Transverse colon (tissue), 4 donors: ENCODE measurements at regions of chr15 and their contacts with region 1.

Region 1: GRCh38 chr15:65184868-65185738 is at the start of gene CLPX:
- DNase-seq: peak; percentile 93
- H3K4me3 ChIP-seq: peak within 1 kb of the TSS; percentile 70 to 97 (median 86)
- H3K27ac ChIP-seq: peak within 1 kb of the TSS; percentile 95 to 98 (median 96)
- H3K4me1 ChIP-seq: peaks cover 9 to 40% (median 24%) of the 10 kb centered on the region in 4 donors
- H3K27me3 ChIP-seq: no peaks in the 10 kb centered on the region
- CTCF ChIP-seq: no peak
- EP300 ChIP-seq: no peak
- POLR2A ChIP-seq: peak; percentile 80
- total RNA-seq, gene CLPX: 12.0 to 72.2 (median 57.4) TPM

Region 2: DNA sequence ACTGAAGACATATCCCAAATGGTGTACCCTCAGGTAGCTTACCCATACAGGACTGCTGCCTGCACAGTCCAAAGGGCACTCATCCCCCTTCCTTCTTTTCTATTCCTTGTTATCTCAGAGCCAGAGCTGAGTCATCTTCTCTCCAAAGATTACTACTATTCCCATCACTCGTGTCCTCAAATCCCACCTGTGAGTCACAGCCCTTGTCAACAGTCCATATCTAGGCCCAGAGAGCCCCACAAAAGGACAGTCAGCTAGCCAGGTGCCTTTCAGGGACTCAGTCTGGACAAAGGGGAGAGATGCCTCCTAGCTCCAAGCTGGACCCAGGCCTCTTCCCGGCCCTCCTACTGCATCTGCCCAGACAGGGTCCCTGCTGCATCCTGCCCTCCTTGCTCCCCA is 90.6 kb after region 1 on chr15:
- in situ Hi-C with region 1: loop called in 2 of 4 experiments (anchors 10 kb)
- intact Hi-C with region 1: loop called (anchors 2 kb)
- DNase-seq: no peak
- H3K4me3 ChIP-seq: no peak overlapping the region
- H3K27ac ChIP-seq: no peak overlapping the region
- H3K4me1 ChIP-seq: peaks cover 6 to 16% (median 9%) of the 10 kb centered on the region in 4 donors
- H3K27me3 ChIP-seq: no peaks in the 10 kb centered on the region
- CTCF ChIP-seq: no peak
- EP300 ChIP-seq: no peak
- POLR2A ChIP-seq: no peak

Region 3: GRCh38 chr15:65292938-65293518 is 107.9 kb after region 1 on chr15:
- in situ Hi-C with region 1: loop called in 1 of 4 experiments (anchors 10 kb)
- intact Hi-C with region 1: no loop called
- DNase-seq: no peak
- H3K4me3 ChIP-seq: no peak overlapping the region
- H3K27ac ChIP-seq: no peak overlapping the region
- H3K4me1 ChIP-seq: peaks cover 0 to 21% (median 16%) of the 10 kb centered on the region in 4 donors
- H3K27me3 ChIP-seq: no peaks in the 10 kb centered on the region
- CTCF ChIP-seq: no peak
- EP300 ChIP-seq: no peak
- POLR2A ChIP-seq: no peak